WTC11 (cell line): ENCODE measurements at regions of chr11 and their contacts with region 1.

Region 1: GRCh38 chr11:116281173-116282160 is 491.3 kb downstream of the BUD13 start:
- DNase-seq: no peak
- ATAC-seq: peak; percentile 66
- H3K4me3 Mint-ChIP-seq: no peak overlapping the region
- H3K27ac Mint-ChIP-seq: no peak overlapping the region
- H3K4me1 Mint-ChIP-seq: no peaks in the 10 kb centered on the region; the same call in 1 of the 2 replicates
- H3K27me3 Mint-ChIP-seq: no peaks in the 10 kb centered on the region
- CTCF ChIP-seq: no peak

Region 2: DNA sequence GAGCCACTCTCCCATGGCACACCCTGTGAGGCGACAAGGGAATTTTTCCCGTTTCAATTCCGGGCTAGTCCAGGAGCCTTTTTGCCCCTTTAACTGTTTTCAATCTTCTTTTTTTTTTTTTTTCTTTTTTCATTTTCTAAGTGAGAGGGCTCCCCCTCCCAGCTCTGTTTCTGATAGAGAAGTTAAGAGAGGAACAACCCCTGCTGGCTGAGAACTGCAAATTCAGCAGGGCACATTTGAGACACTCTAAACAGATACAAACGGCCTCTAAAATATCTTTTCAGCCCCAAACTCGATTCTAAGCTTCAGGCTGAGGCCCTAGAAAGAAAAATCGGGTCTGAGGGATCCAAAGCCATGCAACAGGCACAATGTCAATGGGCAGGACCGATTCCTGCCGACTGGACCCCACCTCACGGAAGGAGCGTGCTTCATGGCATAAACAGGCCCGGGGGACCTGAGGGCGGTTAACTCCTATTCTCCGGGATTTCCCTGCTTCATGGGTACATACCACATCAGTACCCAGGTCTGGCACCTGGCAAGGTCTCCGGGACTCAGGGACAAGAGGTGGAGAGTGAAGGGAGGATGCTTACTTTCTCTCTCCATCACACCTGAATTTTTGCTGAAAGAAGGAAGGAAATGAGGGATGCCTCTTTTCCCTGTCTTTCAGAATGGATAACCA is 136.1 kb before region 1 on chr11:
- CTCF ChIA-PET with region 1: no interaction called
- POLR2A ChIA-PET with region 1: no interaction called
- DNase-seq: no peak
- ATAC-seq: 0 out of 2 replicates have a peak, but pooled peaks have one; percentile 27
- H3K4me3 Mint-ChIP-seq: no peak overlapping the region
- H3K27ac Mint-ChIP-seq: no peak overlapping the region
- H3K4me1 Mint-ChIP-seq: peaks cover 32% of the 10 kb centered on the region
- H3K27me3 Mint-ChIP-seq: no peaks in the 10 kb centered on the region; the same call in 1 of the 2 replicates
- CTCF ChIP-seq: peak; percentile 16; the same call in 1 of the 2 replicates

Region 3: DNA sequence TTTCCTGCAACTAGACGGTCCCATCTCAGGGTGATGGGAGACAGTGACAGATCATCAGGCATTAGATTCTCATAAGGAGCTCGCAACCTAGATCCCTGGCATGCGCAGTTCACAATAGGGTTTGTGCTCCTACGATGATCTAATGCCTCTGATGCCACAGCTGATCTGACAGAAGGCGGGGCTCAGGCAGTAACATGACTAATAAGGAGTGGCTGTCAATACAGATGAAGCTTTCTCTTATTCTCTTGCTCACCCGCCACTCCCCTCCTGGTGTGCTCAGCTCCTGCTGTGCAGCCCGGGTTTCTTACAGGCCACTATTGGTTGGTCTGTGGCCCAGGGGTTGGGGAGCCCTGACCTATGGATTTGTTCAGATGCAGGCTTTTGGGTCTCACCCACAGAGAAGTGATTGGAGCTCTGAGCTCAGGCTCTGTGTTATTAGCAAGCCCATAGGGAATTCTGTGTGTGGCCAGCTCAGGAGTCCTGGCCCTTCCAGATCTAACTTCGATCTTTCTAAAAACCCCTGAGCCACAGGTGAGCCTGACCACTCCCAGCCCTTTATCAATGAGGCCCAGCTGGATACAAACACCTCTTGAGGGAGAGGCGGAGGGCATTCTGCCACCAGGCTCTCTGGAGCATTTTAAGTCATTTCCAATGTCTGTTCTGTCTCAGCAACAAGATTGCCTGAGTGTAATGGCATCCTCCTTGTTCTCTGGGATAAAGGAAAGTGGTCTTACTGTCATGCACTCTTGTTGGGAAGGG is 139.5 kb after region 1 on chr11:
- CTCF ChIA-PET with region 1: interaction called, 14 read pairs
- POLR2A ChIA-PET with region 1: no interaction called
- DNase-seq: no peak
- ATAC-seq: no peak
- H3K4me3 Mint-ChIP-seq: no peak overlapping the region
- H3K27ac Mint-ChIP-seq: no peak overlapping the region
- H3K4me1 Mint-ChIP-seq: peaks cover 39% of the 10 kb centered on the region
- H3K27me3 Mint-ChIP-seq: peaks cover 2% of the 10 kb centered on the region; the same call in 1 of the 2 replicates
- CTCF ChIP-seq: no peak

Region 4: GRCh38 chr11:116519499-116519898 is 238.0 kb after region 1 on chr11:
- CTCF ChIA-PET with region 1: interaction called, 12 read pairs
- POLR2A ChIA-PET with region 1: no interaction called
- DNase-seq: no peak
- ATAC-seq: no peak
- H3K4me3 Mint-ChIP-seq: no peak overlapping the region
- H3K27ac Mint-ChIP-seq: no peak overlapping the region
- H3K4me1 Mint-ChIP-seq: no peaks in the 10 kb centered on the region
- H3K27me3 Mint-ChIP-seq: no peaks in the 10 kb centered on the region; the same call in 1 of the 2 replicates
- CTCF ChIP-seq: no peak